MCF 10A (cell line): ENCODE measurements at regions of chr3 and their contacts with region 1.

Region 1: GRCh38 chr3:5194341-5195159 is 7.0 kb downstream of the EDEM1 start:
- DNase-seq: peak; percentile 91
- H3K4me3 Mint-ChIP-seq: peak overlapping the region; percentile 52
- H3K27ac Mint-ChIP-seq: peak overlapping the region; percentile 95
- H3K4me1 Mint-ChIP-seq: peaks cover 74% of the 10 kb centered on the region
- H3K27me3 Mint-ChIP-seq: no peaks in the 10 kb centered on the region
- CTCF ChIP-seq: no peak

Region 2: GRCh38 chr3:4834403-4834866 is 360.1 kb before region 1 on chr3:
- CTCF ChIA-PET with region 1: no interaction called
- POLR2A ChIA-PET with region 1: no interaction called
- intact Hi-C with region 1: no loop called
- DNase-seq: no peak
- H3K4me3 Mint-ChIP-seq: no peak overlapping the region
- H3K27ac Mint-ChIP-seq: no peak overlapping the region
- H3K4me1 Mint-ChIP-seq: peaks cover 11% of the 10 kb centered on the region
- H3K27me3 Mint-ChIP-seq: no peaks in the 10 kb centered on the region
- CTCF ChIP-seq: no peak

Region 3: DNA sequence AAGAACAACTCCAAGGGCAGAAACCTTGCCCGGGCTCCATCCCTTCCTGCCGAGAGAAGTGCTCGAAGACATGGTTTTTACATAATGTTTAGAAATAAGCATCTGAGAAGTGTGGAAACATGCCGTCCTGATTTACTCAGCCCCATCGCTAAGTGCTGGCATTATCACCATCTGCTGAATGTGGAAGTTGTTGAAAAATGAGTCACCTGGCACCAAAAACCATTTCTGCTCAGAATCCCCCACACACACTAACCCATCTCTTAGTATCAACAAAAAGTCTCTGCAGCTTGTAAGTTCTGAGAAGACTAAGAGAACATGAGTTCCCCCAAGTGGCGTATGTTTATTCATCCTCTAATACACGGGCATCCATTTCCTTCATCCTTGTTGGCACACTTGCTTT is 123.5 kb before region 1 on chr3:
- CTCF ChIA-PET with region 1: interaction called, 5 read pairs
- POLR2A ChIA-PET with region 1: interaction called, 16 read pairs
- intact Hi-C with region 1: no loop called
- DNase-seq: peak; percentile 78
- H3K4me3 Mint-ChIP-seq: no peak overlapping the region
- H3K27ac Mint-ChIP-seq: peak overlapping the region; percentile 42
- H3K4me1 Mint-ChIP-seq: peaks cover 24% of the 10 kb centered on the region
- H3K27me3 Mint-ChIP-seq: no peaks in the 10 kb centered on the region
- CTCF ChIP-seq: no peak

Region 4: GRCh38 chr3:5078151-5078550 is 116.4 kb before region 1 on chr3:
- CTCF ChIA-PET with region 1: interaction called, 5 read pairs
- POLR2A ChIA-PET with region 1: interaction called, 16 read pairs
- intact Hi-C with region 1: no loop called
- DNase-seq: peak; percentile 89
- H3K4me3 Mint-ChIP-seq: no peak overlapping the region
- H3K27ac Mint-ChIP-seq: peak overlapping the region; percentile 27
- H3K4me1 Mint-ChIP-seq: peaks cover 5% of the 10 kb centered on the region
- H3K27me3 Mint-ChIP-seq: no peaks in the 10 kb centered on the region
- CTCF ChIP-seq: no peak

Region 5: DNA sequence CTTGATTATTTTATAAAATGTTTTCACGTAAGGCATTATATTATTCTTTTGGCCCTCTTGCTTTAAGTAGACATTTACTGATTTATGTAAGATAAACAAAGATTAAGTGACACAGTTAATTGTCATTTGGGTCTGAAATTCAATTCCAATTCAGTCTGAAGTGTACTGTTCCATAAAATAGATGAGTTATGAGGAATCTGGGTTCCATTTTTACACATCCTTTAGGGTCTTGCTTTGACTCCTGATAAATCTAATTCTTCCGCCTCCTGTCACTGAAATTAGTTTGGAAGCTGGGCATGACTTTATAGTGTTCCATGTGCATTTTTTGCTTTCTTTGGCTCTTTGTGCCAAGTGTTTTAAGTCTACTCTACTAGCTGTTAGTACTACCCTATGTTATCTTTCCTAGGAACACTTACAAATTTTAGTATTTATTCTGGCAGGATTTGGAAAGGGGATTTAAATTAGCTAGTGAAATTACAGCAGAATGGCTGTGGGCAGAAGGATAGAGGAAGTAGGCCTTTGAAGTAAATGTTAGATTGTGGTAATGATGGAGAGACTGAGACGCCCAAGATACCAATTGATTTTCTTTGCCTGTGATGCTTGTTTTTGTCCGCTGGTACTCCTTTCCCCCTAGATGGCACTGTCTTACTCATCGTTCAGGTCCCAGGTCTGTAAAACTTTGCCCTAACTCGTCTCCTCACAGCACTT is 58.2 kb before region 1 on chr3:
- CTCF ChIA-PET with region 1: interaction called, 14 read pairs
- POLR2A ChIA-PET with region 1: interaction called, 41 read pairs
- intact Hi-C with region 1: loop called (anchors 2 kb)
- DNase-seq: peak; percentile 66
- H3K4me3 Mint-ChIP-seq: peak overlapping the region; percentile 11
- H3K27ac Mint-ChIP-seq: peak overlapping the region; percentile 86
- H3K4me1 Mint-ChIP-seq: peaks cover 63% of the 10 kb centered on the region
- H3K27me3 Mint-ChIP-seq: no peaks in the 10 kb centered on the region
- CTCF ChIP-seq: peak; percentile 31

Region 6: DNA sequence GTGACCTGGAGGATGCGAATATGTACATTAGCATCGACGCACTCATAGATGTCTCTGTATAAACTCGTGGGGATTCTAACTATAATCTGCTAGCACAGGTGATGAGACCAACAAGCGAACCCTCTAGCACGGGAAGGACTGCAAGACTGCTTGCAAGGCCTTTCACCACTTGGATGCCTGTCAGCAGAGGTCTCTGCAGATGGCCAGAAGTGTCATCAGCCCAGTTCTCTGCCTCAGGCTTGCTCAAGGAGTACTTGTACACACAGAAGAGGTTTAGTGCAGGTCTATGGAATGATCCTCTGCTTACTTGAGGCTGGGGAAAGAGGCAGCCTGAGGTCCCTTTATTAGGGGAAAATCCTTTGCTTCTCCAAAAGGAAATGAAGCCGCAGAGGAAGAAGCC is 41.1 kb after region 1 on chr3:
- CTCF ChIA-PET with region 1: no interaction called
- POLR2A ChIA-PET with region 1: no interaction called
- intact Hi-C with region 1: no loop called
- DNase-seq: no peak
- H3K4me3 Mint-ChIP-seq: no peak overlapping the region
- H3K27ac Mint-ChIP-seq: no peak overlapping the region
- H3K4me1 Mint-ChIP-seq: no peaks in the 10 kb centered on the region
- H3K27me3 Mint-ChIP-seq: no peaks in the 10 kb centered on the region
- CTCF ChIP-seq: no peak